Left colon (tissue), 2 donors: ENCODE measurements at regions of chr18 and their contacts with region 1.

Region 1: GRCh38 chr18:63518178-63519012 is 23.8 kb upstream of the SERPINB12 start:
- DNase-seq: peak in 1 of 2 donors; percentile 39
- ATAC-seq: peak; percentile 80

Region 2: DNA sequence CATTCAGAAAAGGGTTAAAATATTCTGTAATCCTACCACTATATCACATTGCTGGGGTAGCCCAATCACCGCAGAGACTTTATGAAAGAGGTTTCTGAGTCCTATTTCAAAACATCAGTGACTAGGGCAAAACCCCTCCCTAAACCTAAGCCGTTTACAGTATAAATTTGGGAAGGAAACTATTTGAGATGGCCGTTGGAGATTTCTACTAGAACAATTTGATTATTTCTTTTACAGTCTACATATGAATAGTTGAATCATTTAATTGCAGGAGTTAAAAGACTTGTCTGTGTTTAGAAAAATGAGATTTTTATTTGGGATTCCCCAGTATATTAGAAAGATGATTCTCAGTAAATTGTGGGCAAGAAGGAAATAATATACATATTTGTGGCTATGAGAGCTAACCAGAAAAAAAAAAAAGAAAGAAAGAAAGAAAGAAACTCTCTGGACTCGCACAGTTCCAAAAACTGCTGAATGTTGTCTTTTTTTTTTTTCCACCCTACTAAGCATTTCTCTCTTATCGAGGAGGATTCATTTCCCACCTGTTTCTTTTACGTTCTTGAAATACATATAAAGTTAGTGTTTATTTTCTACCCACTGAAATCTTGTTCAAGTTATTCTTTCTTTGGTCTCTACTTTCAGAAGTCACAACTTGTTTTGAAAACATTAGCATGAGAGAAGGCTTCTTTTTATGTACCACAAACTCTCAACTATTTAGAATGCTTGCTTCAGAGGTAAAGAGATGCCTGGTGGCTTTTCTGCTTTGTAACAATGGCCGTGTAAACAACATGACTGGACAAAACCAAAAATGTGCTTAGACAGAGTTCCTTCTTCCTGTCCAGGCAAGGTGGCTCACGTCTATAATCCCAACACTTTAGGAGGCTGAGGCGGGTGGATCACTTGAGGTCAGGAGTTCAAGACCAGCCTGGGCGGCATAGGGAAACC is 264.7 kb before region 1 on chr18:
- intact Hi-C with region 1: no loop called
- DNase-seq: no peak
- ATAC-seq: peak; percentile 30

Region 3: DNA sequence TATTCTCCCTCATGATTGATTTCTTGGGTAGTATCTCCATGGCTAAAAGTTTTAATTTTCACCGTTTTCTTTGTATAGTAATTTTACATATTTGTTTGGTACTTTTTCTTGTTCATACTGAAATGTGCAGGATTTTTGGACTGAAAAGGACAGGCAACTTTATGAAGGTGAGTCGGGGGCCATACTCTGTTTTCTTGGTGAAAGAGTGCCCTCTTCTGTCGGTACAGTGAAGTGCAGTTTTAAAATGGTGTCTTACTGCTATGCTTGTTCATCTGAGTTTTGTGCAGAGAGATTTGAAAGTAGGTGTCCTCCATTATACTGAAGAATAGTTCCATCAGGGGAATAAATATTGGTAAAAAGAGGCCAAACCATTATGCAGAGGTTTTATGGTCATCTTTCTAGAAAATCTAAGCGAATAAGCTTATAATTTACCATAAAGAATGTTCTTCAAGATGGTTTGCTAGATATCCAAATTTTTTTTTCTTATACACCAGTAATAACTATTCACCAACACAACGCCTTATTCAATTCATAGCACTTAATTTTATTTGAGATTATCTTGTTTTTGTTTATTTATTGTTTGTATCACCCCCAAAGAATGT is 60.1 kb after region 1 on chr18:
- intact Hi-C with region 1: loop called in 1 of 2 experiments (anchors 5 kb)
- DNase-seq: no peak
- ATAC-seq: peak; percentile 40

Region 4: DNA sequence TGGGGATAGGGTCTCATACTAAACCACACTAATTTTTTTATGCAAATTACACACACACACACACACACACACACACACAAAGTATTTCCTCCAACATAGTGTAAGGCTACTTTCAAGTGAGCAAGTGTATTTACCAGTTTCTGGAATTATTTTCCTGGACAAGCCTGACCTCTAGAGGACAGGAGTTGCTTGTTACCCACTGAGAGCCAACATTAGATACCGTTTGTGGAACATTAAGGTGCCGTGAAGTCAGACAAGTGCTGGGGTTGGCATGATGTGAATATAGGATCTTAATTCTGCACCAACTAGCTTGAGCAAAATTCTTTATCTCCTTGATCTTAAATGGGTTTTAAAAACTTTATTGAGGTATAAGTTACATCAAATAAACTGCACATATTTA is 329.8 kb after region 1 on chr18:
- intact Hi-C with region 1: loop called in 1 of 2 experiments (anchors 5 kb)
- DNase-seq: no peak
- ATAC-seq: peak; percentile 48